SK-N-SH (cell line): ENCODE measurements at regions of chr5 and their contacts with region 1.

Region 1: GRCh38 chr5:134904630-134905245 is at the start of gene PCBD2:
- DNase-seq: peak; percentile 93
- H3K4me3 ChIP-seq: peak within 1 kb of the TSS; percentile 60 to 78
- H3K27ac ChIP-seq: peak within 1 kb of the TSS; percentile 87 to 88
- H3K4me1 ChIP-seq: no peaks in the 10 kb centered on the region
- H3K27me3 ChIP-seq: no peaks in the 10 kb centered on the region
- CTCF ChIP-seq: peak; percentile 80
- EP300 ChIP-seq: 0 out of 4 replicates have a peak, but pooled peaks of 1 of the 2 experiments have one; percentile 12
- RAD21 ChIP-seq: peak; percentile 58
- polyA plus RNA-seq, gene PCBD2: 5.1 and 6.2 TPM in 2 replicates

Region 2: GRCh38 chr5:134626369-134627014 is 278.2 kb before region 1 on chr5:
- CTCF ChIA-PET with region 1: no interaction called
- POLR2A ChIA-PET with region 1: no interaction called
- DNase-seq: no peak
- H3K4me3 ChIP-seq: no peak overlapping the region
- H3K27ac ChIP-seq: no peak overlapping the region
- H3K4me1 ChIP-seq: 0 out of 4 replicates have a peak, but pooled peaks cover 0 to 4% of the 10 kb centered on the region in 2 experiments
- H3K27me3 ChIP-seq: no peaks in the 10 kb centered on the region
- CTCF ChIP-seq: no peak
- EP300 ChIP-seq: no peak
- RAD21 ChIP-seq: no peak

Region 3: GRCh38 chr5:134738133-134738962 is 166.4 kb before region 1 on chr5 and contains the start of gene CAMLG:
- CTCF ChIA-PET with region 1: interaction called, 14 read pairs
- POLR2A ChIA-PET with region 1: interaction called, 8 read pairs
- DNase-seq: peak; percentile 94
- H3K4me3 ChIP-seq: peak within 1 kb of the TSS; percentile 76 to 84
- H3K27ac ChIP-seq: peak within 1 kb of the TSS; percentile 82 to 90
- H3K4me1 ChIP-seq: peaks cover 0 to 12% of the 10 kb centered on the region in 2 experiments; a peak in 2 of 4 replicates
- H3K27me3 ChIP-seq: no peaks in the 10 kb centered on the region
- CTCF ChIP-seq: peak; percentile 67
- EP300 ChIP-seq: no peak
- RAD21 ChIP-seq: peak; percentile 44; the same call in 1 of the 2 replicates
- polyA plus RNA-seq, gene CAMLG: 11.9 and 16.9 TPM in 2 replicates

Region 4: DNA sequence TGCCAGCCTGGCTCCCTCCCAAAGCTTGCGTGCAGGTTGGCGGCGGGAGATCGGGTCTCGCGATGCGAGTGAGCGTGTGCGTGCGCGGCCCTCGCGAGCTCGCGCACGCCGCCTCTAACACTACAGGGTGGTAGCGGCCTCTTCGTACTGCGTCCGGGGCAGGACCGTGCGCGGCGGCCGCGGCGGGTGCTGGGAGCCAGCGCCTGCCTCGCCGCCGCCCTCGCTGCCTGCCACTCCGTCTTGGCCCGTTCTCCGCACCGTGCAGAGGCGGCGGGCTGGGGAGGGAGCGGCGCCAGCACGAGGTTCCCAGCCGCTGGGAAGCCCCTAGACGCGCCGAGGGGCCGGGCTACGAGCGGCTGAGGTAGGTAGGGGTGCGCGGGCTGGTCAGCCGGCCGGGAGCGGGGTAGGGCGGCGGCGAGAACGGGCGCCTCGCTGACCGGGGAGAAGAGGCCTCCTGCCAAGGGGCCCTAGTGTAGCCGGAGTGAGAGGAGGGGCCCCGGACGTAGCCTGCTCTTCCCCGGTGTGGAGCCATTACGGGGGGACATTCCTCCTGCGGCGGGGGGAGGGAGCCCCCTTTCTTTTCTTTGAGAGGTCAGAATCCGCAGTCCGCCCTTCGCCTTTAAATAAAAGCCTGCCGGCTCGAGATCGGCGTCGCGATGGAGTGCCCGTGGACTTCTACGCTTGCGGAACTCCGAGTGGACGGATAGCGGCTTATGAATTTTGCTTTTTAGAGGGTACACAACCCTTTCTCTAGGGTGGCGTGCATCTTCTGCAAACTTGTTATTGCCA is 58.7 kb before region 1 on chr5 and contains the start of gene C5orf24:
- CTCF ChIA-PET with region 1: interaction called, 11 read pairs
- POLR2A ChIA-PET with region 1: interaction called, 10 read pairs
- DNase-seq: peak; percentile 94
- H3K4me3 ChIP-seq: peak within 1 kb of the TSS; percentile 65 to 76
- H3K27ac ChIP-seq: peak within 1 kb of the TSS; percentile 87 to 88
- H3K4me1 ChIP-seq: peaks cover 4 to 32% of the 10 kb centered on the region in 2 experiments
- H3K27me3 ChIP-seq: no peaks in the 10 kb centered on the region
- CTCF ChIP-seq: no peak
- EP300 ChIP-seq: no peak; a peak in 1 of 4 replicates
- RAD21 ChIP-seq: no peak
- polyA plus RNA-seq, gene C5orf24: 21.8 and 34.3 TPM in 2 replicates

Region 5: DNA sequence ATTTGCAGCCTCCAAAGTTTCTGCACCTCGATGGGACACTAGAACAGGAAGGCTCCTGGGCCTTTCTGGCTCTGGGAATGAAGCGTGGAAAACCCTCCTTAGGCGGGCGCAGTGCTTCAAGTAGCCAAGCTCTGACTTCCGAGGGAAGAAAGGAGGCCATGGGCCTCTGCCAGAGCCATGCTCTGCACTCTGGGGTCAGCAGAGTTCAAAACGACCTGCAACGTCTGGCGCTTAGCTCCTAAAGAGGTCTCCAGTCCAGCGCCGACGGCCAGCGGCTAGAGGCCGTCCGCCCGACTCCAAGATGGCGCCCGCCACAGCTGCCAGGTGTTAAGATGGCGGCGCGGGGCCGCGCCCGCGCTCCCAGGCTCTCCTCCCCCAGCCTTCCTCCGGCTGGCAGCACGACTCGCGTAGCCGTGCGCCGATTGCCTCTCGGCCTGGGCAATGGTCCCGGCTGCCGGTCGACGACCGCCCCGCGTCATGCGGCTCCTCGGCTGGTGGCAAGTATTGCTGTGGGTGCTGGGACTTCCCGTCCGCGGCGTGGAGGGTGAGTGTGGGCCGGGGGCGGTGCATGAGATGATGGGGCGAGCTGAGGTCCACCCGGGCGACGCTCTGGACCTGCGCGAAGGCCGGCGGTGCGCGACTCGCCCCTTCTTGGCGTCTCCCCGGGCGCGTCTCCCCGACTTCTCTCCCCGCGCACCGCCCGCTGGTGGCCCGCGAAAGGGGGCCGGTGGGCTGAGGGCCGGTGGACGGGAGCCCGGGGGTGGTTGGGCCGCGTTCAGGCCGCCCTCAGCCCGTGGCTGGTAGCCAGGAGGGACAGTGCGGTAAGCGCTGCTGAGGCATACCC is 30.5 kb before region 1 on chr5 and contains the start of gene TXNDC15:
- CTCF ChIA-PET with region 1: interaction called, 18 read pairs
- POLR2A ChIA-PET with region 1: interaction called, 17 read pairs
- DNase-seq: peak; percentile 93
- H3K4me3 ChIP-seq: peak within 1 kb of the TSS; percentile 70 to 78
- H3K27ac ChIP-seq: peak within 1 kb of the TSS; percentile 89
- H3K4me1 ChIP-seq: peaks cover 9 to 22% of the 10 kb centered on the region in 2 experiments; a peak in 2 of 4 replicates
- H3K27me3 ChIP-seq: no peaks in the 10 kb centered on the region
- CTCF ChIP-seq: no peak
- EP300 ChIP-seq: 0 out of 4 replicates have a peak, but pooled peaks of 1 of the 2 experiments have one; percentile 14
- RAD21 ChIP-seq: no peak
- polyA plus RNA-seq, gene TXNDC15: 93.9 and 112 TPM in 2 replicates

Region 6: DNA sequence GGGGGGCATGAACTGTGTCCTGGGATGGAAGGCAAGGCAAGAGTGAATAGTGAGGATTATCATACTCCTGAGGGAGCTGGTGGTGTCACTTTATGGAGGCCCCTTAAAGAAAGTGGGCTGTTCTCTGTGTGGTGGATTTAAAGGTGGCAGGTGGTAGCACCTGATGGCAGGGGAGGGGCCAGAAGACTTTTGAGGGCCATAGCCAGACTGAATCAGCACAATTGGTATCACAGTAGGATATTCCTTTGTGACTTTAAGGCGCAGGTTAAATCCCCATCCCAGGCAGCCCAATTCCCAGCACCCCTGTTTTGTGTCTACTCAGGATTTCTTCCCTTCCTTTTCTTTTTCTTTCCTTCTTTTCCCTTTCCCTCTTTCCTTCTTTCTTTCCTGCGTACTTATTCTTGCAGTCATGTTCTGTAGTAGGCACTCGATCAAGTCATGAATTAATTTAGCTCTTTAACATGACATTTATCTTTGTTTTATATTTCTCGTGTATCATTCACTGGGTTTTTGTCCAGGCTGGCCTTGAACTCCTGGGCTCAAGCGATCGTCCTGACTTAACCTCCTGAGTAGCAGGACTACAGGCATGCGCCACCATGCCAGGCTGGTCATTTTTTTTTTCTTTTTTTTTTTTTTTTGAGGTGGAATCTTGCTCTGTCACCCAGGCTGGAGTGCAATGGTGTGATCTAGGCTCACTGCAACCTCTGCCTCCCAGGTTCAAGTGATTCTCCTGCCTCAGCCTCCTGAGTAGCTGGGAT is 10.8 kb before region 1 on chr5:
- CTCF ChIA-PET with region 1: interaction called, 14 read pairs
- POLR2A ChIA-PET with region 1: interaction called, 3 read pairs
- DNase-seq: no peak
- H3K4me3 ChIP-seq: no peak overlapping the region
- H3K27ac ChIP-seq: no peak overlapping the region
- H3K4me1 ChIP-seq: no peaks in the 10 kb centered on the region
- H3K27me3 ChIP-seq: no peaks in the 10 kb centered on the region
- CTCF ChIP-seq: no peak
- EP300 ChIP-seq: no peak
- RAD21 ChIP-seq: no peak

Region 7: DNA sequence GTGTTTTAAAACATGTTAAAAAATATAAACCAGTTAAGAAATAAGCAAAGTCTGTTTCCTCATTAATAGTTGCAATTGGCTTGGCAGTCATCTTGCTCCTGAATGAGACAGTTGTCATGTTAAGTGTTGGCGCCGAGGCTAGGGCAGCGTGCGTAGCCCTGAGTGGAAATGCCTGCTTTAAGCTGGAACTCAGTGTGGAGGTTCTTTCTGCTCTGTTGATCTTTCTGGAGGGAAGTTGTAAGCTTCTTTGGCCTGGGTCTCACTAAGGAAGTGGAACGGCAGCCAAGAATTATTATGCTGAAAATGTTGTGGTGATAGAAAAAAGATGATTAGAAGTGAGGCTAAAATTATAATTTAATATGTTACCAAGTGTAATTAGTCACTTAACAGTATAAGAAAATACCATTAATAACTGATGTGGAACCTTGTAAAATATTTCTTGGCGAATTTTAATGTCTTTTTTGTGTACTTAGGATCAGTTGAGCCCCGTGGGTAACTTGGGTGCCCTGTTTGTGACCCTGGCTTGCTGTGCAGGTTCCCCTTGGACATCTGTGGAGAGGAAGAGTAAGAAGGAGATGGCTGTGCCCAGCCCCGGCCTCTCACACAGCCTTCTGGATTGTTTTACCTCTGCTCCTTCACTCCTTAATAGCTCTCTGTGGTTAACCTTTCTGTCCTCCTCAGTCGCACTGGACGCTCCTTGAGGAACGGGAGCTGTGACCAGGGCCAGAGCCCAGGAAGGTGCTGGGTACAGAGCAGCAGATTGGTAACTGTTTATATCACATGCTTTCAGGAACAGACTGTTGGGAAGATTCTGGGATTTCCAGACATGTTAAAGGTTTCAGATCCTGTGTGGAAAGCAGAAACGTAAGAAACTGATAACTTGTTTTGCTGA is 31.2 kb after region 1 on chr5:
- CTCF ChIA-PET with region 1: interaction called, 16 read pairs
- POLR2A ChIA-PET with region 1: no interaction called
- DNase-seq: no peak
- H3K4me3 ChIP-seq: no peak overlapping the region
- H3K27ac ChIP-seq: no peak overlapping the region
- H3K4me1 ChIP-seq: peaks cover 0 to 20% of the 10 kb centered on the region in 2 experiments; a peak in 2 of 4 replicates
- H3K27me3 ChIP-seq: no peaks in the 10 kb centered on the region
- CTCF ChIP-seq: no peak
- EP300 ChIP-seq: no peak
- RAD21 ChIP-seq: no peak